ENCODE measurements at regions of chr3 and their contacts with region 1.

Region 1: DNA sequence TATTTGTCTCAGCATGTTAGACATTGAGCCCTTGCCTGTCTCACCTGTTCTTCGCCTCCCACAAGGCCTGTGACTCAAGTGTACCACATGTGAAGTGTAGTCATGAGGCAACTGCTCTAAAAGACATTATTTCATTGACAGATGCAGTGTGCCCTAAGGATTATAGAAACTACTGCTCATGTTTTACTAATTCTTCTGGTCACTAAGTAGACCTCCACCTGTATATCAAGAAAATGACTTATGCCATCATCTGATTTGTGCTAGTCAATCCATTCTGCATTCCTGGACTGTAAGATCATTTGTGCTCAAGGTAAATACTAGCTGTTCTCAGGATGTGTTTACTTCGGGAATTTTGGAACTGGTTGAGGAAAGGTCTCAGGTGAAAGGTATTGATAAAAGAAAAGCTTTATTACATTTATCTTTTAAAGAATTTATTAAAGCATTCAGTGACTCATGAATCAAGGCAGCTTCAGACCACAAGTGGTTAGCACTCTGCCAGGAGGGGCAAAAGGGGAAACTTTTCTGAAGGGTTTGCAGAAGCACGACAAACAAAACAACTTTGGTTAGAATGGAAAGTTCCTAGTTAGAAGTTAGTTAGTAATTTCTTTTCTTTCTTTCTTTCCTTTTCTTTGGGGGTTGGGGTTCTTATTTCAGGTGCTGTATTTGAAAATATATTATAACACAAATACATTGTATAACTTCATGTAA is 465.3 kb upstream of the CBLB start:
- DNase-seq: no peak
- H3K4me3 Mint-ChIP-seq: peak overlapping the region; percentile 63
- H3K27ac Mint-ChIP-seq: peak overlapping the region; percentile 91
- H3K4me1 Mint-ChIP-seq: peaks cover 76% of the 10 kb centered on the region
- H3K27me3 Mint-ChIP-seq: no peaks in the 10 kb centered on the region

Region 2: DNA sequence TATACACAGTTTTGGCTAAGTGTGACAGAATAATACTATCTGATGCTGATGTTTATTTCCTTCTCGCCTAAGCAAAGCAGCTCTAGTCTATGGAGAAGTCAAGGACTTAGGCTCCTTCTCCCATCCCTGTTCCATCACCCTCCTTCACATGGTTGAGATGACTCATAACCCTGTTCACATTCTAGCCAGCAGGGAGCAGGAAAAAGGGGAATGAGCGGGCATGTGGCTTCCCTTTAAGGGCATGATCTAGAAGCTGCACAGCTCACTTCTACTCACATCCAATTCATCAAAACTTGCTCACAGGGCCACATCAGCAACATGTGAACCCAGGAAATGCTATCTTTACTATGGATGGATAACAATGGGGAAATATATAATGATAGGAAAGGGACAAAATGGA is 506.1 kb before region 1 on chr3:
- intact Hi-C with region 1: loop called (anchors 1 kb)
- DNase-seq: no peak
- H3K4me3 Mint-ChIP-seq: peak overlapping the region; percentile 37
- H3K27ac Mint-ChIP-seq: peak overlapping the region; percentile 100
- H3K4me1 Mint-ChIP-seq: peaks cover 80% of the 10 kb centered on the region
- H3K27me3 Mint-ChIP-seq: no peaks in the 10 kb centered on the region

Region 3: DNA sequence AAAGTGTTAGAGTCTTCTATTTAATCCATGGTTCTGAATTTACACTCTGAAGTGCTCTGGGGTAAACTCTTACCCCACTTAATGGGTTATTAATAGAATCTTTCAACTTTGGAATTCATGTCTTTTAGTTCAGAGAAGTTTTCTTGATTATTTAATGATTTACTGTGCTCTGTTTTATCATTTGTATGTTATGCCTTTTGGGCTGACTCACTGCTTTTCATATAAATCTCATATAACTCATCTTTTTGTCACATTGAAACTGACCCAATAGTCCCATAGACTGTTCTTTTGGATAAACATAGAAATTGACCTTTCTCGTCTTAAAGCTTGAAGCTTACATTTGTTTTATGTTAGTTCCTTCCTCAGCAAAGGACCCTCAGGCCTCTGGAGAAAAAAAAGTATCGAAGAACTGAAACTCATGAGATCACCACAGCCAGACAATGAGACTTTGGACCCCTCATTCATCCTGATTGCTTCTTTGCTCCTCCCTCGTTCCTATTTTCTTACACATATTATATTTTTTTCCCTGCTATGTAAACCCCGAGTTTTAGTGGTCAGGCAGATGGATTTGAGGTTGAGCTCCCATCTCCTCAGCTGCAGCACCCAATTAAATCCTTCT is 236.1 kb before region 1 on chr3:
- intact Hi-C with region 1: no loop called
- DNase-seq: no peak
- H3K4me3 Mint-ChIP-seq: no peak overlapping the region
- H3K27ac Mint-ChIP-seq: no peak overlapping the region
- H3K4me1 Mint-ChIP-seq: peaks cover 2% of the 10 kb centered on the region
- H3K27me3 Mint-ChIP-seq: no peaks in the 10 kb centered on the region

Region 4: GRCh38 chr3:106176734-106177133 is 157.3 kb before region 1 on chr3:
- intact Hi-C with region 1: loop called (anchors 1 kb)
- DNase-seq: peak; percentile 72
- H3K4me3 Mint-ChIP-seq: peak overlapping the region; percentile 57
- H3K27ac Mint-ChIP-seq: peak overlapping the region; percentile 91
- H3K4me1 Mint-ChIP-seq: peaks cover 59% of the 10 kb centered on the region
- H3K27me3 Mint-ChIP-seq: no peaks in the 10 kb centered on the region

Region 5: GRCh38 chr3:106231086-106231485 is 103.0 kb before region 1 on chr3:
- intact Hi-C with region 1: loop called (anchors 1 kb)
- DNase-seq: no peak
- H3K4me3 Mint-ChIP-seq: peak overlapping the region; percentile 58
- H3K27ac Mint-ChIP-seq: peak overlapping the region; percentile 94
- H3K4me1 Mint-ChIP-seq: peaks cover 43% of the 10 kb centered on the region
- H3K27me3 Mint-ChIP-seq: no peaks in the 10 kb centered on the region

Region 6: DNA sequence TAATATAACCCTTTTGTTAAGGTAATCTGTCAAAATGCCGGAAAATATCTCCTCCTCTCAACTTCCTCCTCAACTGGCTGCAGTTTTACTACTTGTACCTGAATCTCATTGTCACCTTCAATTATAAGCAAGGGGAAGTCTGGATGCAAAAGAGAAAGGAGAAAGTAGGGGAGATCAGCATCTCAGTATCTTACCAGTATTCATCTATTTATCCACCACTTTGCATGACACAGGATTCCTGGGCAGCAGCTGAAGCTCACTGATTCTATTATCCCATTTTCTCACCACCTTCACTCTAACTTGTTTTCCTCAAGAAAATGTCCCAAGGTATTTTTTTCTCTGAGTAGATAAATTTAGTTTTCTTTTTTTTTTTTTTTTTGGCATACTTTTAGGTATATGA is 24.8 kb before region 1 on chr3:
- intact Hi-C with region 1: no loop called
- DNase-seq: no peak
- H3K4me3 Mint-ChIP-seq: no peak overlapping the region
- H3K27ac Mint-ChIP-seq: no peak overlapping the region
- H3K4me1 Mint-ChIP-seq: peaks cover 2% of the 10 kb centered on the region
- H3K27me3 Mint-ChIP-seq: no peaks in the 10 kb centered on the region

Region 7: DNA sequence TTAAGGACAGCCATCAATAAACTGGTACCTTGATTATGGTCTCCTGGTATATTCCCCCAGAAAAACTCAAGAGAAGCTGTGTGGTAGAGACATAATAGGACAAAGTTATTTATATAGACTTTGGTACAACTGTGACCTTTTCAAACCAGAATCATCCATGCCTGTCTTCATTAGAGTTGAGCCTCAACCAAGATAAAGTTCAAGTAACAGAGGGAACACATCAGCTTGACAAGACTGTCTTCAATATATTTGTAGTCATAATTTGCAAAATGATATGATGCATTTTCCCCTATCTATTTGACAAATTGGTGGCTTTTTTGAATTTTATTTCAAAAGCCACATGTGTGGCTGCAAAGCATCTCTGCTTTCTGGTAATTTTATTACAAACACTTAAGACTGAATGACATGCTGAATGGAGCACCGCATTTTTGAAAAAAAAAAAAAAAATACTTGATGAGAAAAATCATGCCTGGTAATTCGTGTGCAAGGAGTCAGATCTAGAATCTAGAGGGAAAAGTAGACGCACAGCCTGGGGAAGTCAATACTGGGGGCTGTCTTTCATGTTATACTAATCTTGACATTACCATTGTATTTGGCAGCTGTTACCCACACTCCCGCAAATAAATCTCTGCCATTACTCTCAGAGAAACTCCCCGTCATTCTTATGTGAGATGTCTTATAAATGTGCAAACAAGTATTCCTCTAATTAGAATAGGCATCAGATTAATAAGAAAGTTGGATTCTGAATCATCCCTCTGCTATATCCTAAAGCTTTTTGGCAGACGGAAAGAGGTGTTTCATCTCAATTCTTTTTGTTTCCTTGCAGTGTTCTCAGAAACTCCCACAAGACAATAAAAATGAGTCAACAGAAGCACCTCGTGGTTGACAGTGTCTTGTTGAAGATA is 89.5 kb after region 1 on chr3:
- intact Hi-C with region 1: loop called (anchors 1 kb)
- DNase-seq: no peak
- H3K4me3 Mint-ChIP-seq: peak overlapping the region; percentile 20
- H3K27ac Mint-ChIP-seq: peak overlapping the region; percentile 78
- H3K4me1 Mint-ChIP-seq: peaks cover 47% of the 10 kb centered on the region
- H3K27me3 Mint-ChIP-seq: no peaks in the 10 kb centered on the region

Region 8: GRCh38 chr3:106589311-106589942 is 255.4 kb after region 1 on chr3:
- intact Hi-C with region 1: loop called (anchors 1 kb)
- DNase-seq: no peak
- H3K4me3 Mint-ChIP-seq: no peak overlapping the region
- H3K27ac Mint-ChIP-seq: peak overlapping the region; percentile 55
- H3K4me1 Mint-ChIP-seq: peaks cover 16% of the 10 kb centered on the region
- H3K27me3 Mint-ChIP-seq: no peaks in the 10 kb centered on the region